GM10248 (cell line): ENCODE measurements at regions of chr20 and their contacts with region 1.

Region 1: DNA sequence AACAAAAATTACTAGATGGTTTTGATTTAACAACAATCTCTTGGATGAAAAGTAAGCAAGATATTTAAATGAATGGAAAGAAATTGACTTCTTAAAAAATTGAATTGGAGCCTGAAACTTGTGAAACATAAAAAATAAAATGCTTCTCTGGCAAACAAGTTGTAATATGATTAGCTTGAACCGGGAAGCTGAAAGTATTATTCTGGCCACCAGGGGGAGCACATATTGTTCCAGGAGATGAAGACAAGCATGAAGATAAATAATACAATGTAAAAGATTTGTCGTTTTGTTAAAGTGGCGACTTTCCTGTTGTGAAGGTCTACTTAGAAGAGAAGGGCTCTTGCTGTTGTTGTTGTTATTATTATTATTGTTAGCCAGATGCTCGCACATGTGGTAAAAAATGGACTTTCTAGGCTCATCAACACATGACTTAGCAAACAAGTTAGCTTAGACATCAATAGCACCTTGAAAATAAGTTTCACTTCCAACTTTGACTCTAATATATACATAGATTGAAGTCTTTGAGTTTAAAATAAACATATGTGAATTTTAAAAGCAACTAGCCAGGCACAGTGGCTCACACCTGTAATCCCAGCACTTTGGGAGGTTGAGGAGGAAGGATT is 14.2 kb downstream of the PAX1 start:
- DNase-seq: peak; percentile 48
- CTCF ChIP-seq: peak; percentile 83

Region 2: GRCh38 chr20:21520702-21521595 is 198.8 kb before region 1 on chr20:
- CTCF ChIA-PET with region 1: no interaction called
- POLR2A ChIA-PET with region 1: no interaction called
- DNase-seq: peak; percentile 18
- CTCF ChIP-seq: no peak

Region 3: GRCh38 chr20:21534453-21534852 is 185.2 kb before region 1 on chr20:
- CTCF ChIA-PET with region 1: no interaction called
- POLR2A ChIA-PET with region 1: no interaction called
- DNase-seq: no peak
- CTCF ChIP-seq: no peak

Region 4: DNA sequence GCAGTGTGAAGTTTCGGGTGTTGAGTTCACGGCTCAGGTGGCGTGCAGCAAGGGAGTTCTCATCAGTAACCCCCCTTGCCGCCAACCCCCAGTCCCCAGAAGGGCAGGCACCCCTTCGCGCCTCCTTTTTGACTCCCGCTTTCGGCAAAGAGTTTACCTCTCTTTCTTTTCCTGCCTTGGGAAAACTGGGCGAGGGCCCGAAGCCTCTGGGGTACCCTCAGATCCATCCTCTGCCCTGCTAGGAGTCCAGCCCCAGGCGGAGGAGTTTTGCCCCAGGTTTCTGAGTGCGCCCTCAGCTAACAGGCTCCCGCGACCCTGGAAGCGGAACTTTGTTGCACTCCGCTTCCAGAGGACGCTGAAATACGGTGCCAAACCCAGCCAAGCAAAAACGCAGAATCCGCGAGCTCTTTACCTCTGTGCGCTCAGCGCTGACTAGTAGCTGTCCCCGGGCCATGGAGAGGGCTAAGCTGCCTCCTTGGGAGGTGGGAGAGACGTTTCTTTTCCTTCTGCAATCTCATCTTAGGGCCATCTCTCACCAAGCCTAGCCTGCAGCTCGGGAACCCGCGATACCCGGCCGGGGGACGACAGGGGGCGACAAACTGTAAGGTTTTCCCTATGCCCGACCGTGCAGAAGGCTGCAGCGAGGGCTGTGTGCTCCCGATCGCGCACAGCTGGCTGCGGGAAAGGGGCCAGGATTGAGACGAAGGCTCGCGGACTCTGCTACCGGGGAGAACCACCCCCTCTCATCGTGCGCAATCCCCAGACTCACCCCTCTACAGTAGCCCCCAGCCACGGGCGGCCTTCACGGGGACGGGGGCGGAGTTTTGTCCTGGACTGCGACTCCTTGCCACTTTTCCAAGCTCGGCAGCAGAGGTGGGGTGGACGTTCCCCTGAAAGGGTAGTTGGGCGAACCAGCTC is 16.9 kb before region 1 on chr20:
- CTCF ChIA-PET with region 1: interaction called, 32 read pairs
- POLR2A ChIA-PET with region 1: no interaction called
- DNase-seq: peak; percentile 53
- CTCF ChIP-seq: peak; percentile 34

Region 5: GRCh38 chr20:21739161-21739560 is 19.5 kb after region 1 on chr20:
- CTCF ChIA-PET with region 1: interaction called, 15 read pairs
- POLR2A ChIA-PET with region 1: no interaction called
- DNase-seq: no peak
- CTCF ChIP-seq: no peak